Caco-2 (cell line): ENCODE measurements at regions of chr4 and their contacts with region 1.

Region 1: DNA sequence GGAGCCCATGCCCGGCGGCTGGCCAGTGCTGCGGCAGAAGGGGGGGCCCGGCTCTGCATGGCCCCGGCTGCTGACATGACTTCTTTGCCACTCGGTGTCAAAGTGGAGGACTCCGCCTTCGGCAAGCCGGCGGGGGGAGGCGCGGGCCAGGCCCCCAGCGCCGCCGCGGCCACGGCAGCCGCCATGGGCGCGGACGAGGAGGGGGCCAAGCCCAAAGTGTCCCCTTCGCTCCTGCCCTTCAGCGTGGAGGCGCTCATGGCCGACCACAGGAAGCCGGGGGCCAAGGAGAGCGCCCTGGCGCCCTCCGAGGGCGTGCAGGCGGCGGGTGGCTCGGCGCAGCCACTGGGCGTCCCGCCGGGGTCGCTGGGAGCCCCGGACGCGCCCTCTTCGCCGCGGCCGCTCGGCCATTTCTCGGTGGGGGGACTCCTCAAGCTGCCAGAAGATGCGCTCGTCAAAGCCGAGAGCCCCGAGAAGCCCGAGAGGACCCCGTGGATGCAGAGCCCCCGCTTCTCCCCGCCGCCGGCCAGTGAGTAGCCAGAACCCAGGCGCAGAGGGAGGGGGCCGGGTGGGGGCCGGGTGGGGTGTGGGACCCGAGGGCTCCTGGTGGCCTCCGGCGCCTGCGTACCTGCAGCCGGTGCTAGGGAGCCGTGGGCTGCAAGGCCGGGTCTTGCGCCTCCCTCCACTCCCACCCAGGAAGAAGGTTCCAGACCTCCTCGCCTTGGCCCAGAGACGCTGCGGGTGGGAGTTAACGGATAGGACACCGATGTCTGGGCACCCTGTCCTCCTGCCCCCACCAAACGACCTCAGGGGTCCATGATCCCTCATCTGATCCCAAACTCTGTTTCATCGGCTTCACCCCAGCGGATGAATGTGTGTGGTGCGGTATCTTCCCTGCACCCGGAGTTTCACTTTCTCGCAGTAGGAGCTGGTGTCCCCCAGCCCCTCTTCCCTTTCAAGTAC is 658 bp downstream of the MSX1 start:
- DNase-seq: peak in 1 of 2 experiments; percentile 53
- H3K4me3 ChIP-seq: peak overlapping the region; percentile 93
- H3K4me3 Mint-ChIP-seq: peak overlapping the region; percentile 99
- H3K27ac Mint-ChIP-seq: peak overlapping the region; percentile 95
- H3K4me1 ChIP-seq: peaks cover 7% of the 10 kb centered on the region; the same call in 1 of the 2 replicates
- H3K4me1 Mint-ChIP-seq: no peaks in the 10 kb centered on the region
- H3K27me3 ChIP-seq: no peaks in the 10 kb centered on the region
- H3K27me3 Mint-ChIP-seq: no peaks in the 10 kb centered on the region
- CTCF ChIP-seq: no peak

Region 2: DNA sequence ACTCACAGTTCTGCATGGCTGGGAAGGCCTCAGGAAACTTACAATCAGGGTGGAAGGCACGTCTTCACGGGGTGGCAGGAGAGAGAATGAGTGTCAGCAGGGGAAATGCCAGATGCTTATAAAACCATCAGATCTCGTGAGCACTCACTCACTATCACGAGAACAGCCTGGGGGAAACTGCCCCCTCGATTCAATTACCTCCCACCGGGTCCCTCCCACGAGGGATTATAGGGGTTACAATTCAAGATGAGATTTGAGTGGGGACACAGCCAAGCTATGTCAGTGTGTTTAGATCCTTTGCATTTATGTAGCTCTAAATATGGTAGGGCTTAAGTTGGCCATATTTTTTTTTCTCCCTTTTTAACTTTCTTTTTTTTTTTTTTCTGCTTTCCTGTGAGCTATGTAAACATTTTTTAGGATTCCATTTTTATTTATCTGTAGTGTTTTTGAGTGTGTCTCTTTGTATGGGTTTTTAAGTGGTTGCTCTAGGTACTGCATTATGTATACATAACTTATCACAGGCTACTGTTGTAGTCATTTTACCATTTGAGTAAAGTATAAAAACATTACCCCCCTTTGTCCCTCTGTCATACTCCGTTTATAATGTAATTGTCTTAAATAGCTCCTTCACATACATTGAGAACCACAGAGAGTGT is 1014.9 kb before region 1 on chr4:
- CTCF ChIA-PET with region 1: no interaction called
- POLR2A ChIA-PET with region 1: no interaction called
- intact Hi-C with region 1: no loop called
- DNase-seq: no peak
- H3K4me3 ChIP-seq: no peak overlapping the region
- H3K4me3 Mint-ChIP-seq: no peak overlapping the region
- H3K27ac Mint-ChIP-seq: no peak overlapping the region
- H3K4me1 ChIP-seq: no peaks in the 10 kb centered on the region
- H3K4me1 Mint-ChIP-seq: no peaks in the 10 kb centered on the region
- H3K27me3 ChIP-seq: no peaks in the 10 kb centered on the region
- H3K27me3 Mint-ChIP-seq: peaks cover 11% of the 10 kb centered on the region
- CTCF ChIP-seq: no peak

Region 3: GRCh38 chr4:4595252-4595651 is 264.9 kb before region 1 on chr4:
- CTCF ChIA-PET with region 1: no interaction called
- POLR2A ChIA-PET with region 1: no interaction called
- intact Hi-C with region 1: loop called (anchors 10 kb)
- DNase-seq: peak; percentile 48 to 56
- H3K4me3 ChIP-seq: no peak overlapping the region
- H3K4me3 Mint-ChIP-seq: no peak overlapping the region
- H3K27ac Mint-ChIP-seq: no peak overlapping the region
- H3K4me1 ChIP-seq: no peaks in the 10 kb centered on the region
- H3K4me1 Mint-ChIP-seq: no peaks in the 10 kb centered on the region
- H3K27me3 ChIP-seq: no peaks in the 10 kb centered on the region
- H3K27me3 Mint-ChIP-seq: no peaks in the 10 kb centered on the region
- CTCF ChIP-seq: peak; percentile 69 to 79

Region 4: GRCh38 chr4:4659871-4660651 is 200.1 kb before region 1 on chr4:
- CTCF ChIA-PET with region 1: no interaction called
- POLR2A ChIA-PET with region 1: no interaction called
- intact Hi-C with region 1: loop called (anchors 10 kb)
- DNase-seq: no peak
- H3K4me3 ChIP-seq: no peak overlapping the region
- H3K4me3 Mint-ChIP-seq: no peak overlapping the region
- H3K27ac Mint-ChIP-seq: peak overlapping the region; percentile 28
- H3K4me1 ChIP-seq: peaks cover 15% of the 10 kb centered on the region
- H3K4me1 Mint-ChIP-seq: peaks cover 11% of the 10 kb centered on the region
- H3K27me3 ChIP-seq: no peaks in the 10 kb centered on the region
- H3K27me3 Mint-ChIP-seq: no peaks in the 10 kb centered on the region
- CTCF ChIP-seq: no peak